ENCODE measurements at regions of chr9 and their contacts with region 1.

Region 1: DNA sequence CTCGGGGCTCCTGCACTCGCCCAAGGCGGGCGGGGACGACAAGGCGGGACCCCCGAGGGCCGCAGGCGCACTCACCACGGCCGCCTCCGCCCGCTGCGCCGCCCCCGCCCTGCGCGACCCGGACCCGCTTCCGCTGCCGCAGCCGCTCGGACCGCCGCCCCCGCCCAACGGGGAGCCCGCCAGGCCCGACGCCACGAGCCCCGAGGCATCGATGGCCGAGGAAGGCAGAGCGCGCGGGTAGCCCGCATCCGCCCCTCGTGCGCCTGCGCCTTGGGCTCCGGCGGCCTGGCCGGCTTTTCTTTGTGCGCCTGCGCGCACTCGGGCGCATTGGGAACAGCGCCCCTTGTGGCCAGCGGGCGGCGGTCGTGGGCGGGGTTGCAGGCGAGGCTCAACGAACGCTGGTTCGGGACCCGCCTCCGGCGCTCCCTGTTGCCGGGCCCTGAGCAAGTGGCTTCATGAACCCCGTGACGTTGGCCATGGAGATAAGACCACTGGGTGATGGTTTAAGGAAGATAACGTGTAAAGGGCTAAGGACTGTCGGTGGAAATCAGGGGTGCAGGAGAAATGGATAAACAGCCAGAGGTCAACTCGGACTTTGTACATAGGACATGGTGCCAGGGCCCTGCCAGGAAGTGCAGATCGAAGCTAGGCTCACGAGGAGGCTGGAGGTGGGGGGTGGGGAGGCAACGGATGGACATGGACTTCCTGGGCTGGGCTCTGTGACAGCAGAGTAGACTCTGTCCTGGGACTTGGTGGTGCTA is at the starts of genes C8G and FBXW5:
- DNase-seq: peak; percentile 94
- H3K4me3 ChIP-seq: peak within 1 kb of the TSS; percentile 85 to 90
- H3K27ac ChIP-seq: peak within 1 kb of the TSS; percentile 74 to 87
- H3K4me1 ChIP-seq: peaks cover 43% of the 10 kb centered on the region
- H3K27me3 ChIP-seq: no peaks in the 10 kb centered on the region
- CTCF ChIP-seq: peak; percentile 100
- POLR2A ChIP-seq: no peak
- total RNA-seq, gene C8G: 4.6 to 4.9 TPM
- total RNA-seq, gene FBXW5: 509 to 749 TPM

Region 2: DNA sequence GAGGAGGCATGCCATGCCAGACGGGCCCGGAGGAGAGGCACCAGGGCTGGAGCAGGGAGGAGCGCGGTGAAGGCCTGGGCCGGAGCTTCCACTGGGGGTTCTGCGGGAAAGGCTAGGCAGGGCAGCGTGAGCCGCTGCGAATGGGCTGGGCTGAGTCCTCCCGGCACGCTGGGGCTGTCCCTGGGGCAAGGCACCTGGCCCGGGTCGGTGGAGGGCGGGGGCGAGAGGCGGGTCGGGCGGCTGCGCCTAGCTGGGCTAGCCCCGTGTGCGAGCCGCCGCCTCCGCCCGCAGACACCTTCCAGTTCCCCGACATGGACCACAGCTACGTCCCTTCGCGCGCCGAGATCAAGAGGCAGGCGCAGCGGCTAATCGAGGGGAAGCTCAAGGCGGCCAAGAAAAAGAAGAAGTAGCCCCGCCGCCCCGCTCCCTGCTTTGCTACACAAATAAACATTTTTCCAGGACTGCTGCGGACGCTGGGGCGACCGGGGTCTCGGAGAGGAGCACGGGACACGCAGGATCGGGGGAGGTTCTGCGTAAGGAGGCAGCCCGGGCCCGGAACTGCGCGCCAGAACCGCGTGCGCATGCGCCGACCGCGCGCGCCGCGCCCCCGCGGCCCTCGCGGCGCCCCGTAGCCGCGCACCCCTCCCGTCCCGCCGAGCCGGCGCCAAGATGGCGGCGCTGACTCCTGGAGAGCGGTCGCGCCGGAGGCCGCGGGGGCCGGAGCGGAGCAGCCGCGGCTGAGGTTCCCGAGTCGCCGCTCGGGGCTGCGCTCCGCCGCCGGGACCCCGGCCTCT is 137.2 kb before region 1 on chr9 and contains the start of gene RABL6:
- intact Hi-C with region 1: loop called (anchors 5 kb)
- DNase-seq: peak; percentile 76
- H3K4me3 ChIP-seq: peak within 1 kb of the TSS; percentile 79 to 94
- H3K27ac ChIP-seq: peak within 1 kb of the TSS; percentile 86 to 88
- H3K4me1 ChIP-seq: peaks cover 12% of the 10 kb centered on the region
- H3K27me3 ChIP-seq: no peaks in the 10 kb centered on the region
- CTCF ChIP-seq: peak in 1 of 3 experiments; percentile 16
- POLR2A ChIP-seq: peak; percentile 7
- total RNA-seq, gene RABL6: 95.1 to 103 TPM

Region 3: GRCh38 chr9:136961279-136962065 is 16.8 kb after region 1 on chr9:
- intact Hi-C with region 1: no loop called
- DNase-seq: peak; percentile 87
- H3K4me3 ChIP-seq: no peak overlapping the region
- H3K27ac ChIP-seq: peak overlapping the region; percentile 56 to 81
- H3K4me1 ChIP-seq: peaks cover 64% of the 10 kb centered on the region
- H3K27me3 ChIP-seq: no peaks in the 10 kb centered on the region
- CTCF ChIP-seq: no peak
- POLR2A ChIP-seq: no peak